ENCODE measurements at regions of chr19 and their contacts with region 1.

Region 1: GRCh38 chr19:19404879-19405860 is at the start of gene GATAD2A:
- DNase-seq: peak; percentile 89
- ATAC-seq: peak; percentile 92
- H3K4me3 ChIP-seq: peak within 1 kb of the TSS; percentile 68
- H3K27ac ChIP-seq: peak within 1 kb of the TSS; percentile 67
- H3K4me1 ChIP-seq: peaks cover 12% of the 10 kb centered on the region
- H3K27me3 ChIP-seq: no peaks in the 10 kb centered on the region
- CTCF ChIP-seq: peak; percentile 41
- POLR2A ChIP-seq: peak; percentile 77; the same call in 1 of the 2 replicates
- RAD21 ChIP-seq: peak; percentile 32; the same call in 1 of the 2 replicates
- total RNA-seq, gene GATAD2A: 23.5 and 32.8 TPM in 2 replicates

Region 2: DNA sequence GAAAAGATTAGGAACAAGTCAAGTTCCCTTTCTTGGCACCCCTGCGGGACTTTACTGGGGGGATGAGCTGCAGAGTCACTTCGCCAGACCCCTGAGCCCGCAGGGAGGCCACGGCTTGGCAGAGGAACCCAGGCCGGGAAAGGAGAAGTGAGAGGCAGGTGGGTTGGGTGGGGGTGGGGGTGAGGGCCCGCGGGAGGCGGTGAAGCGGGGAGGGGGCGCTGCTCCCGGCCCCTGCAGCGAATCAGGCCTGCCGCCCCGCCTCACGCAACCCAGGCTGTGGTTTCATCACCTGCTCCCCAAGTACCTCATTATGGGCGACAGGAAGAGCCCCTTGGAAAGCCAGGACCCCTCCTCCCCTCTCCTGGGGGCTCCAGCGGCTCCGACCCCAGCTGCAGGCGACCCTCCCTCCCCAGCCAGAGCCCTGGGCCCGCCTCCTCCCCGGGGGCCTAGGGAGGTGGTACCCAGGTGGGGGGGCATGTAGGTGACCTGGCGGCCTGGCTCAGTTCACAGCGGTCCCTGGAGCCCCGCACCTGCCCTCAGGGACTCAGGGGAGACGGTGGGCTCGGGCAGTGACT is 244.6 kb before region 1 on chr19:
- CTCF ChIA-PET with region 1: no interaction called
- POLR2A ChIA-PET with region 1: no interaction called
- dilution Hi-C with region 1: no loop called
- in situ Hi-C with region 1: no loop called
- intact Hi-C with region 1: no loop called
- DNase-seq: no peak
- ATAC-seq: no peak
- H3K4me3 ChIP-seq: no peak overlapping the region
- H3K27ac ChIP-seq: no peak overlapping the region
- H3K4me1 ChIP-seq: no peaks in the 10 kb centered on the region
- H3K27me3 ChIP-seq: no peaks in the 10 kb centered on the region
- CTCF ChIP-seq: no peak
- POLR2A ChIP-seq: no peak
- RAD21 ChIP-seq: no peak

Region 3: DNA sequence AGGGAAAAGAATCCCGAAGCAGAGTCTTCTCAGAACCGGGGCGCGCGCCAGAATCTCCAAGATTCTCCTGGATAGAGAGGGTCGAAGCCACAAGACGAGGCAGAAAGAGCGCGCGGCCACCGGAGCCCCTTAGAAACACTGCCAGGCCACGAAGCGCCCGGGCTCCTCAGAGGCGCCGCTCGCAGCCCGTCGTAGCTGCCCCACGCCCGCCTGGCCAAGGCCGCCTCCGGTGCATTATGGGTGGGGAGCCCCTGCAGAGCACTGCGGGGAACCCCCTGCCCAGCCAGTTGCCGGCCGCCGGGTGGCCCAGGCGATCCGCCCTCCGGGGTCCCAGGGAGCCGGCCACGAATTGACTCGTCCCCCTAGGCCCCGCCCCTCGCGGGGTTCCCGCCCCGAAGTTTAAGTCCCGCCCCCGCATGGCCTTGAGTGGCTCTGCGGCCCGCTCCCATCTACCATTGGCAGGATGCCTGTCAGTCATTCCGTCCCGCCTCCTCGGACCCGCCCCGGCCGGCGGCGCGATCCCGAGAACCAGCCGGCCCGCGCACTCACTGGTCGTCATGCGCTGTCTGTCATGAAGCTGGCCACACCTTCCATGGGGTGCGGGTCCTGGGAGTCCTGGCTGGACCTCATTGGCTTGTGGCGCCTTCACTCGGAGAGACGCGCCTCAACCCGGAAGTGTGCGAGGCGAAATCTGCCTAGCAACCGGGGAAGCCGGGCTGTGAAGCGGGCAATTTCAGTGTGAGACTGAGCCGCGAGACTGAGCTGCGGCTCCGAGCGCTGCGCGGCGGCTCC is 19.9 kb before region 1 on chr19:
- CTCF ChIA-PET with region 1: no interaction called
- POLR2A ChIA-PET with region 1: no interaction called
- dilution Hi-C with region 1: no loop called
- in situ Hi-C with region 1: no loop called
- intact Hi-C with region 1: loop called (anchors 2 kb)
- DNase-seq: peak; percentile 100
- ATAC-seq: peak; percentile 96
- H3K4me3 ChIP-seq: peak overlapping the region; percentile 71
- H3K27ac ChIP-seq: peak overlapping the region; percentile 55
- H3K4me1 ChIP-seq: peaks cover 8% of the 10 kb centered on the region
- H3K27me3 ChIP-seq: no peaks in the 10 kb centered on the region
- CTCF ChIP-seq: peak; percentile 20; the same call in 1 of the 2 replicates
- POLR2A ChIP-seq: peak; percentile 74
- RAD21 ChIP-seq: no peak

Region 4: GRCh38 chr19:19426216-19426615 is 21.0 kb after region 1 on chr19:
- CTCF ChIA-PET with region 1: no interaction called
- POLR2A ChIA-PET with region 1: interaction called, 13 read pairs
- dilution Hi-C with region 1: no loop called
- in situ Hi-C with region 1: no loop called
- intact Hi-C with region 1: no loop called
- DNase-seq: no peak
- ATAC-seq: no peak
- H3K4me3 ChIP-seq: no peak overlapping the region
- H3K27ac ChIP-seq: no peak overlapping the region
- H3K4me1 ChIP-seq: no peaks in the 10 kb centered on the region
- H3K27me3 ChIP-seq: no peaks in the 10 kb centered on the region
- CTCF ChIP-seq: no peak
- POLR2A ChIP-seq: no peak
- RAD21 ChIP-seq: no peak

Region 5: DNA sequence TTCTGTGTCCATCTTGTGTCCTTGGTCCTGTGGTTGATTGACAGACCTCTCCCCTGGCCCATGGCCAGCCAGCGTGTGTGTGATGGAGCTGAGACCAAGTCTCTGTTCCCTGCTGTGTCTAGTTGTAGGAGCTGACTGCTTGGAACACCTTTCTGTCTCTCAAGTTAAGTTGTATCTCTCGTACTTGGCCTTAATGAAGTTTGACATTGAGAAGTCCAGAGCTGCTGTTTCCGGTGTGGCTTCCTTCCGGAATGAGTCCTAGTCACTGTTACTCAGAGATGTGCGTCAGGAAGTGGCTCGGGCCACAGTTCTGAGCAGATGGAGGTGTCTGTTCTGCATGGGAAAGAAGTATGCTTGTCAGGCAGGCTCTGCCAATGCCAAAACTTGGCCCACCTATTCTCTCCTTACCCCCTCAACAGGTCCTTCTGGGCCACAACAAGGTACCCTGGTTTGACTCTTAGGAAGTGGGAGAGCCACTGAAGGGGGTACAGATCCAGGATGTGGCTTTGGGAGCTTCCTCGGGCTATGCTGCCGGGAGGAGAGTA is 54.6 kb after region 1 on chr19:
- CTCF ChIA-PET with region 1: no interaction called
- POLR2A ChIA-PET with region 1: interaction called, 3 read pairs
- dilution Hi-C with region 1: no loop called
- in situ Hi-C with region 1: no loop called
- intact Hi-C with region 1: loop called (anchors 2 kb)
- DNase-seq: peak; percentile 87
- ATAC-seq: peak; percentile 13
- H3K4me3 ChIP-seq: peak overlapping the region; percentile 2; the same call in 1 of the 2 replicates
- H3K27ac ChIP-seq: peak overlapping the region; percentile 88
- H3K4me1 ChIP-seq: peaks cover 64% of the 10 kb centered on the region
- H3K27me3 ChIP-seq: no peaks in the 10 kb centered on the region
- CTCF ChIP-seq: no peak
- POLR2A ChIP-seq: peak; percentile 68; the same call in 1 of the 2 replicates
- RAD21 ChIP-seq: no peak

Region 6: DNA sequence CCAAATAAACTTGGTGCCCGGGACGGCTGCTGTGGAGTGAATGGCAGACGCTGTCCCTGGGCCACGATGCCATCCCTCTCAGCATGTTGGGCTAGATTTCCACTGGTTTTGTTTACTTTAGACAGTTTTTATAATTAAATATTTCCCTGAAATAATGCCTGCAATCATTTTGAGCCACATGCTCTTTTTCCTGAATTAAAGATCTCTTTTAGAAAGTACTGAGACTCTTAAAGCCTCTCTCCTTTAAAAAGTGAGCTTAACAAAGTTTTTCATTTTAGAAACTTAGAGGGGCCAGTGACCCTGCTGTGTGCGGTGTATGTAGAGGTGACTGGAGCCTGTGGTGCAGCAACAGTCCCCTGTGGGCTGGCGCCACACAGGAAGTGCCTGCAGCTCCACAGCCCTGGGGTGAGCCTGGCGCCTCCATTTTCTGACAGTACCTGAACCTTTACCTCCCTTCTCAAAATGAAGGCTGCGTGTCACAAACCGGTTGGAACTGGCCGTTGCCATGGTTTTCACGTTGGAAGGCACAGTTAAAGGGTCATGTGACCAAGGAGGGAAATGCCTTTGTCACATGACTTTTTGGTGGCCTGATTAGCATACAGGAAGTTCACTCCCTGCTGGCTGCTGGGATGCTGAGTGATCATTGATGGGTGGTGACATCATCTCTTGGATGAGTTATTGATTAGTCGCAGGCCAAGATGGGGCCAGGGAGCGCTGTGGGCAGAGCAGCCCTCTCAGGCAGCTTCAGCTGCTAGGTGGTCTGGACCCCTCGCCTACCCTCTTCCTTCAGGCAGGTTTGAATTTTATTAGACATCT is 83.9 kb after region 1 on chr19:
- CTCF ChIA-PET with region 1: interaction called, 15 read pairs
- POLR2A ChIA-PET with region 1: no interaction called
- dilution Hi-C with region 1: no loop called
- in situ Hi-C with region 1: no loop called
- intact Hi-C with region 1: loop called (anchors 2 kb)
- DNase-seq: peak; percentile 96
- ATAC-seq: peak; percentile 54
- H3K4me3 ChIP-seq: no peak overlapping the region; the same call in 1 of the 2 replicates
- H3K27ac ChIP-seq: peak overlapping the region; percentile 93
- H3K4me1 ChIP-seq: peaks cover 38% of the 10 kb centered on the region
- H3K27me3 ChIP-seq: no peaks in the 10 kb centered on the region
- CTCF ChIP-seq: no peak
- POLR2A ChIP-seq: peak; percentile 24; the same call in 1 of the 2 replicates
- RAD21 ChIP-seq: no peak

Region 7: DNA sequence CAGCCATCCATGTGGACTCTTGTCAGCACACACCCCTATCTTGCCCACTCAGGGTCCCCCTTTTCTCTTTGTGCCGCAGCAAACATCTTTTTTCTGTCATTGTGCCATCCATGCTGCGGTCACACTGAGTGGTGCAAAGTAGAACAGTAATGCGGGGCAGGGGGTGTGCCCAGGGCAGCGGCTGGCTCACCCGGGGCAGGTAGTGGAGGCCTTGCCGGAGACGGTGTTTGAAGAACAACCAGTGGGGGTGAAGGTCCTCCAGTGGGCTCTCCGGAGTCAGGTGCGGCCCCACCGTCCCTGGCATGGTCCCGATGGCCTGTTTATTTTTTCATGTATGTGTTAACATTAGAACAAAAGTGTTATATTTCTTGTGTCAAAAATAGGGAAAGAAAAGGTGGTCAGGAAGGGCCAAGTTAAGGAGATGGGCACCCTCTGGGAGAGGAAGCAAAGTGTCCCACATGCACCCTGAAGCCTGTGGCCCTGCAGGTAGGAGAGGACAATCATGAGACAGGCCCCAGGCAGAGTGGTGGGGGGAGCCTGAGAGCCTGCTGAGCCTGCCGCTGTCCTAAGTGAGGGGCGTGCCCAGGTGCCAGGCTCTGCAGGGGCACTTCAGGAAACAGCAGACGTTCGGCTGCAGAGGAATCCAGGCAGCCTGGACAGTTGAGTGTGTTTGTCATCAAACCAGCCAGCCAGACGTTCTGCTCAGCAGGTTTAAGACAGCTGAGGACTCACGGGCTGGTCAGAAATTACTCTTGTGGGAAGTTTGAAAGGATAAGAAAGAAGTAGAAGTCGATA is 97.8 kb after region 1 on chr19:
- CTCF ChIA-PET with region 1: no interaction called
- POLR2A ChIA-PET with region 1: no interaction called
- dilution Hi-C with region 1: no loop called
- in situ Hi-C with region 1: no loop called
- intact Hi-C with region 1: no loop called
- DNase-seq: no peak
- ATAC-seq: no peak
- H3K4me3 ChIP-seq: no peak overlapping the region
- H3K27ac ChIP-seq: no peak overlapping the region
- H3K4me1 ChIP-seq: no peaks in the 10 kb centered on the region
- H3K27me3 ChIP-seq: no peaks in the 10 kb centered on the region
- CTCF ChIP-seq: no peak
- POLR2A ChIP-seq: no peak
- RAD21 ChIP-seq: no peak

Region 8: GRCh38 chr19:19873381-19873780 is 468.2 kb after region 1 on chr19:
- CTCF ChIA-PET with region 1: no interaction called
- POLR2A ChIA-PET with region 1: no interaction called
- dilution Hi-C with region 1: no loop called
- in situ Hi-C with region 1: no loop called
- intact Hi-C with region 1: no loop called
- DNase-seq: no peak
- ATAC-seq: no peak
- H3K4me3 ChIP-seq: no peak overlapping the region
- H3K27ac ChIP-seq: no peak overlapping the region
- H3K4me1 ChIP-seq: no peaks in the 10 kb centered on the region
- H3K27me3 ChIP-seq: no peaks in the 10 kb centered on the region
- CTCF ChIP-seq: no peak
- POLR2A ChIP-seq: no peak
- RAD21 ChIP-seq: no peak

Measured in IMR-90 (cell line).